Natural killer cell (primary cell): ENCODE measurements at regions of chr4 and their contacts with region 1.

Region 1: DNA sequence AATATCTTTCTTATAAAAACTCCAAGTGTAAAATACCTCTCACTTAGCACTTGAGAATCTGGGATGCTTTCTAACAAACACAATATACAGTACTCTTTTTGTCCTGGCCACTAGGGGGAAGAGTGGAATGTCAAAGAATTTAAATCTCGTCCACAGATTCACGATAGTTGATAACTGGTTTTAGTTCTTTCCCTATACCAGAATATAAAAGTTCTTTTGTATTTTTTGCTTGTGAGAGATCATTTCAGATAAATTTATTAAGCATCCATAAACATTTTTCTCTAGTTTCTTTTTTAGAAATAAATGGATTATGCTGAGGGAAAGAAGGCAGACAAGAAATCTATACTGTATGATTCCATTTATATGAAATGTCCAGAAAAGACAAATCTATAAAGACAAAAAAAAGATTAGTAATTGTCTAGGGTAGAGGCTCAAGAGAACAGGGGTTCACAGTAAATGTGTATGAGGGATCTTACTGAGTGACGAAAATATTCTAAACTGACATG is 50.4 kb downstream of the MGARP start:
- DNase-seq: peak in 1 of 2 donors; percentile 75
- ATAC-seq: peak; percentile 62 to 83 (median 82)
- H3K4me3 ChIP-seq: no peak overlapping the region
- H3K4me3 Mint-ChIP-seq: no peak overlapping the region
- H3K27ac ChIP-seq: no peak overlapping the region
- H3K27ac Mint-ChIP-seq: no peak overlapping the region
- H3K4me1 ChIP-seq: no peaks in the 10 kb centered on the region
- H3K4me1 Mint-ChIP-seq: peaks cover 0 to 5% of the 10 kb centered on the region in 2 donors
- H3K27me3 ChIP-seq: no peaks in the 10 kb centered on the region
- H3K27me3 Mint-ChIP-seq: no peaks in the 10 kb centered on the region
- CTCF ChIP-seq: peak; percentile 69

Region 2: GRCh38 chr4:138374947-138375346 is 854.6 kb before region 1 on chr4:
- intact Hi-C with region 1: no loop called
- DNase-seq: no peak
- ATAC-seq: no peak
- H3K4me3 ChIP-seq: no peak overlapping the region
- H3K4me3 Mint-ChIP-seq: no peak overlapping the region
- H3K27ac ChIP-seq: no peak overlapping the region
- H3K27ac Mint-ChIP-seq: no peak overlapping the region
- H3K4me1 ChIP-seq: no peaks in the 10 kb centered on the region
- H3K4me1 Mint-ChIP-seq: no peaks in the 10 kb centered on the region
- H3K27me3 ChIP-seq: no peaks in the 10 kb centered on the region
- H3K27me3 Mint-ChIP-seq: no peaks in the 10 kb centered on the region
- CTCF ChIP-seq: no peak

Region 3: GRCh38 chr4:139099366-139099982 is 130.1 kb before region 1 on chr4:
- intact Hi-C with region 1: loop called (anchors 5 kb)
- DNase-seq: peak; percentile 45 to 92
- ATAC-seq: peak; percentile 80 to 86 (median 86)
- H3K4me3 ChIP-seq: no peak overlapping the region
- H3K4me3 Mint-ChIP-seq: no peak overlapping the region
- H3K27ac ChIP-seq: no peak overlapping the region
- H3K27ac Mint-ChIP-seq: no peak overlapping the region
- H3K4me1 ChIP-seq: no peaks in the 10 kb centered on the region
- H3K4me1 Mint-ChIP-seq: peaks cover 0 to 9% of the 10 kb centered on the region in 2 donors
- H3K27me3 ChIP-seq: no peaks in the 10 kb centered on the region
- H3K27me3 Mint-ChIP-seq: no peaks in the 10 kb centered on the region
- CTCF ChIP-seq: peak; percentile 83

Region 4: DNA sequence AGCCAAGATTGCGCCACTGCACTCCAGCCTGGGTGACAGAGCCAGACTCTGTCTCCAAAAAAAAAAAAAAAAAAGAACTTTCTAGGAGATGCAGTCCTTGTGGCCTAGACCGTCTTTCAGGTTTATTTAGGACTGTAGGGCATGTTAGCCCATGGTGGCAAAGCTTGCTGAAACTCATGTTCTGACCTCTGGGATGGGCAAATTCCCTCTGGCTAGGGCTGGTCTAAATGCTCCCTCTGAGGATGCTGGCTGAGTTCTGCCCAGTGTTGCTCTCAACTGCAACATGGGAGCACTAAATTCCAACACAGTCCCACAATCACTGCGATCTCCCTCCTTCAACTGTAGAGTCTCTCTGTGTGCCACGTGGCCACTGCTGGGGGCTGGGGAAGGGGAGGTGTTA is 204.1 kb after region 1 on chr4:
- intact Hi-C with region 1: no loop called
- DNase-seq: no peak
- ATAC-seq: no peak
- H3K4me3 ChIP-seq: no peak overlapping the region
- H3K4me3 Mint-ChIP-seq: no peak overlapping the region
- H3K27ac ChIP-seq: no peak overlapping the region
- H3K27ac Mint-ChIP-seq: no peak overlapping the region
- H3K4me1 ChIP-seq: no peaks in the 10 kb centered on the region
- H3K4me1 Mint-ChIP-seq: no peaks in the 10 kb centered on the region
- H3K27me3 ChIP-seq: no peaks in the 10 kb centered on the region
- H3K27me3 Mint-ChIP-seq: no peaks in the 10 kb centered on the region
- CTCF ChIP-seq: no peak